HCT116 (cell line): ENCODE measurements at regions of chr11 and their contacts with region 1.

Region 1: DNA sequence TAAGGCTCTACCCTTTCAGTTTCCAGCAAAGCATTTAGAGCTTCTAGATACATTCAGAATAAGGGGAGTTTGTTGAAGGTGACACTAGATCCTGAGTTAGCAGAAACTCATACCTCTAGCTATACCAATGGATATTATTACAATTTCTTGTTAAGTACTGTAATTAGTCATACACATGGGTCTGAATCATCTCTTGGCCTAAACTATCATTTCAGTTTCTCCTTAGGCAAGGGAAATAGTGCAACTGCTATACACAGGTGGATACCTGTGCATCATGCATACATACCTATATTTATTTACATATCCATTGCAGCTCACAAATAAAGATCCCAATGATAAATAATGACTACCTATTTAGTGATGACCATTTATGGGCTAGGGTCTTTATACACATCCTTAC is 45.1 kb upstream of the PAX6 start:
- DNase-seq: no peak
- ATAC-seq: no peak
- H3K4me3 ChIP-seq: no peak overlapping the region
- H3K27ac ChIP-seq: no peak overlapping the region
- H3K4me1 ChIP-seq: no peaks in the 10 kb centered on the region
- H3K27me3 ChIP-seq: no peaks in the 10 kb centered on the region
- CTCF ChIP-seq: no peak
- POLR2A ChIP-seq: no peak
- RAD21 ChIP-seq: no peak

Region 2: DNA sequence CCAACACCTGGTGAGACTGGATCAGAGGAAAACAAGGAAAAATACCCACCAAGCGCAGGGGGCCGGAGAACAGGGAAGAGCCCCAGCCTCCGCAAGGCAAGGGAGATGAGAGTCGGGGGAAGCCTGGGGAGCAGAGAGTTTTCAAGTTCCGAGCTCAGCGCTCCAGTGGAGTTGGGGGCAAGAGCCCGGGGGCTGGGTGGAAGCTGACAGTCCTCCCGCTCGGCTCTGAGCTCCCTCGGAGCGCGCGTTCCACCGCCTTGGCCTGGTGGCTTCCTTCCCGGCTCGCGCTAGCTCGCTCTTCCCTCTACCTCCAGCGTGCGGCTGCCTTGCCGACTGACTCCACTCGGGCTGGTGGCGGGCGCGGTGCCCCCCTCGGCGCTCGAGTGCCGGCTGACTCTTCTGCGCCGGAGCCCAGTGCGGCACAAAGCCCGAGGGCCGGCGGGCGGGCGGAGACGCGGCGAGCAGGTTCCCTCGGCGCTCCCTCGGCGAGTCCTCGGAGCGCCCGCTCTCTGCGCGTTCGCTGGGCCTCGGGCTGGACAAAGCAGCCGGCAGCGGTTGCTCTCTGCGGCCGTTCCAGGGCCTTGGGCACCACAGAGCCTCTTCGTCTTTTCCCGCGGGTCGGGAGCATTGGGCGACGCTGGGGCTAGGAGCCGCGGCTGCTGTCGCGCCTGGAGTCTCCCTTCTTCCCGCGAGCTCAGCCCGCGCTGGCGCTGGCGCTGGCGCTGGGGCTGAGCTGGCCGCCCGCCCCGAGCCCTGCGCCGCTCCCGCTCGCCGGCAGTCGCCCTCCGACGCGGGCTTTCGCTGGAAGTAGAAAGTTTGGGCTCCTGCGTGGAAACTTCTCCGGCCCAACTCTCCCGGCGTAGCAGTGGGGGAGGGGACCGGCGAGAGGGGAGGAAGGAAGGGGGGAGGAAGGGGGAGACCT is 46.1 kb before region 1 on chr11:
- CTCF ChIA-PET with region 1: no interaction called
- POLR2A ChIA-PET with region 1: no interaction called
- RAD21 ChIA-PET with region 1: no interaction called
- intact Hi-C with region 1: loop called (anchors 1 kb)
- DNase-seq: no peak
- ATAC-seq: peak; percentile 78
- H3K4me3 ChIP-seq: peak overlapping the region; percentile 57 to 78
- H3K27ac ChIP-seq: peak overlapping the region; percentile 22; the same call in 1 of the 2 replicates
- H3K4me1 ChIP-seq: peaks cover 0 to 16% of the 10 kb centered on the region in 2 experiments; a peak in 2 of 4 replicates
- H3K27me3 ChIP-seq: no peaks in the 10 kb centered on the region
- CTCF ChIP-seq: no peak
- POLR2A ChIP-seq: no peak
- RAD21 ChIP-seq: no peak